Aorta (tissue), 5 donors: ENCODE measurements at regions of chr11 and their contacts with region 1.

Region 1: DNA sequence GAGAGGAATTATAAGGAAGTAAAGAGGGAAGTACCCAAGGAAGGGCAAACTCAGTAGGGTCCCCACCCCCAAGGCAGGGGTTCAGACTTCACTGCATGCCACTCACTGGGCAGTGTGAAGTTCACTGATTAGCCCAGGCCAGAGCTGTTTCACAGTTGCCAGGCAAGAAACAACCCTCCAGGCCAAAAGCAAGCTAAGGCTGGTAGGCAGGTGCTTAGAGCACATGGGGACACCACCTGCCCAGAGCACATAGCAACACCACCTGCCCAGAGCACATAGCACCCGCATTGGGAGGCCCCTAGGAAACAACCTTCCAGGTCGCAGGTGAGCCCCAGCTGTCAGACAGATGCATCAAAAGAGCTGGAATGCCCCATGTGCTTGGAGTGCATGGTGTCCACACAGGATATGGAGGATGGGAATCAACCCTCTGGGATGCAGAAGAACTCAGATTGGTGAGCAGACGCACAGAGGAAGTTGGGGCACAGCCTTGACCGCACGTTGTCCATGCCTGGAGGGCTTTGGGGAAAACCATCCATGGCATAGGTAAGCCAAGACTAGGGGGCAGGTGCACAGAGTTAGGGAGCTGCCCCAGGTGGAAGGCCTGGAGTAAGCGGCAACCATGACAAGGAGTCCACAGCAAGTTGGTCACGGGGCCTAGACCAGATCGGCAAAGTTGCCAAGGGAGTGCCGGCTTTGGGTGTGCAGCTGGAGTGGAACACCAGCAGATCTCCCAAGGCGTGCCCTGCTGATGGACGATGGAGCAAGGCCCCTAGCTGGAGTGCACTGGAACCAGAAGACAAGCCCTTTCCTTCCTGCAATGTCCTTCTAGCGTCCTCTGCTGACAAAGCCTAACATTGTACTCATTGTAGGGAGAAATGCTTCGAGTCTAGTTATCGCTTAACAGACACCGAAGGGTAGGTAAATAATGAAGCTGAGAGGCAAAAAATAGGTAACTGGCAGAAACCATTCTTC is 7.8 kb upstream of the TMEM216 start:
- DNase-seq: no peak
- ATAC-seq: peak; percentile 7
- H3K4me3 ChIP-seq: no peak overlapping the region
- H3K27ac ChIP-seq: no peak overlapping the region
- H3K4me1 ChIP-seq: no peaks in the 10 kb centered on the region
- H3K27me3 ChIP-seq: no peaks in the 10 kb centered on the region

Region 2: GRCh38 chr11:61294717-61295595 is 89.6 kb before region 1 on chr11 and contains the start of gene VWCE:
- intact Hi-C with region 1: no loop called
- DNase-seq: peak; percentile 66 to 85
- ATAC-seq: peak; percentile 74
- H3K4me3 ChIP-seq: peak within 1 kb of the TSS in 1 of 2 donors; percentile 36
- H3K27ac ChIP-seq: no peak within 1 kb of the TSS
- H3K4me1 ChIP-seq: peaks cover 0 to 3% of the 10 kb centered on the region in 2 donors
- H3K27me3 ChIP-seq: no peaks in the 10 kb centered on the region
- total RNA-seq, gene VWCE: 3.0 to 5.6 TPM

Region 3: DNA sequence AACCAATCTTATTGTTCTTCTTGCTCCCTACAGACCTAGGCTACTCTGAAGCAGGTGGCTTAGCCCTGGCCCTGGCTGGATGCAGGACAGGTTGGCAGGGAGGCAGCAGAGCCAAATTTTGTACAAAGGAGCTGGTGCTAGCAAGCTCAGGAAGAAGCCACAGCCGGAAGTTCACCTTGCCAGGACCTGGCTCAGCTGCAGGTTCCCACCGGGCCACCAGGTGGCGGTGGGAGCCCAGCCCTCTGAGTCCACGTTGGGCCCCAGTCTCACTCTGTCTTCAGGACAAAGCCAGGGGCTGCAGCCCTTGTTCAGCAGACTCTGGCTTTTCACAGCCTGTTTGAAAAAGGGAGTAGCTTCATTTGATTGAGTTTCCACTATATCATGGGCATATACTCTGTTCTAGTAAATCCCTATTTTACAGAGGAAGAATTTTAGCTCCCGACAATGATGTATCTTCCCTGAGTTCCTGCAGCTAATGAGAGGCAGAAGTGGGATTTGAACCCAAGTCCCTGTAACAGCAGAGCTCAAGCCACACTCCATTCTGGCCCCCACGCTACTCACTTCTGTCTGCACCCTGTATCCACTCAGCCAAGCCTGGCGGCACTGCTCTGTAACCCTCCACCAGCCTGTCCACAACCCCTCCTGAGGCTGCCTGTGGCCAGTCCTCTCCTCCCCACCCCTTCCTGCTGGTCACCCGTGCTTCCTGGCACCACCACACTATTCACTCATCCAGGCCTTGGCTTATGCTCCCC is 48.2 kb before region 1 on chr11:
- intact Hi-C with region 1: loop called (anchors 1 to 2 kb)
- DNase-seq: peak; percentile 84 to 91
- ATAC-seq: peak; percentile 84
- H3K4me3 ChIP-seq: no peak overlapping the region
- H3K27ac ChIP-seq: no peak overlapping the region
- H3K4me1 ChIP-seq: peaks cover 0 to 2% of the 10 kb centered on the region in 2 donors
- H3K27me3 ChIP-seq: no peaks in the 10 kb centered on the region